Activated CD8-positive, alpha-beta memory T cell treated with anti-CD3 and anti-CD28 coated beads, Interleukin-2, amount 10 ng/mL, durations not matched to agents 7 days and 5 days (primary cell): ENCODE measurements at regions of chr14 and their contacts with region 1.

Region 1: GRCh38 chr14:93033983-93034670 is 81.6 kb downstream of the ITPK1 start:
- DNase-seq: peak; percentile 80
- ATAC-seq: peak; percentile 93
- H3K4me3 Mint-ChIP-seq: no peak overlapping the region
- H3K27ac Mint-ChIP-seq: peak overlapping the region; percentile 80
- H3K4me1 Mint-ChIP-seq: peaks cover 45% of the 10 kb centered on the region
- H3K27me3 Mint-ChIP-seq: no peaks in the 10 kb centered on the region

Region 2: DNA sequence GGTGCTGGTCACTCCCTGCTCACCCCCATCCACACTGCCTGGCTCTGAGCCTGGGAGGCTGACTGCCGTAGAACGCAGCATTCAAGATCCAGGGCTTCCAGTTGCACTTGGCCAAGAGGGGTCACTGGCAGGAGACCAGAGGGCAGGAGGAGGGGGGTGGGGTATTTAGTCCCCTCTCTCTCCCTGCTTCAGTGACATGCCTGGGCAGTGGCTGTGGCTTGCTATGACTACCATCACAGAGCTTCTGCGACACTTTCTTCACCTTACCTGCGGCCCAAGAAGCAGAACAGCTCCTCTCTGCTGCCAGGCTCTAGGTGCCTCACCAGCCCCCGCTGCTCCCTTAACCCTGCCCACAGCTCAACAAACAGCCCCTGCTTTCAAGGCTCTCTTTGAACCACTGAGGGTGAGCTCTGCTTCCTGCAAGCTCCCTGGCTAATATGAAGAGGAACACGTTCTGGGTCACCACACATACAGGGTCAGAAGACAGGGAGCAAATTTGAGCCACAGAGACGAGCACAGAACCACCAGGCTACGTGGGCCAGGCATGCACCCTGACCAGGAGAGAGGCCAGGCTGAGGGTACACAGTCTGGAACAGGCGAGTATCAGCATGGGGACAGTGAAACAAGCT is 25.9 kb after region 1 on chr14:
- CTCF ChIA-PET with region 1: interaction called, 12 read pairs
- DNase-seq: peak; percentile 57
- ATAC-seq: peak; percentile 59
- H3K4me3 Mint-ChIP-seq: peak overlapping the region; percentile 1
- H3K27ac Mint-ChIP-seq: peak overlapping the region; percentile 81
- H3K4me1 Mint-ChIP-seq: peaks cover 53% of the 10 kb centered on the region
- H3K27me3 Mint-ChIP-seq: no peaks in the 10 kb centered on the region

Region 3: GRCh38 chr14:93132470-93133065 is 98.4 kb after region 1 on chr14:
- CTCF ChIA-PET with region 1: interaction called, 16 read pairs
- DNase-seq: peak; percentile 50
- ATAC-seq: peak; percentile 57
- H3K4me3 Mint-ChIP-seq: no peak overlapping the region
- H3K27ac Mint-ChIP-seq: no peak overlapping the region
- H3K4me1 Mint-ChIP-seq: no peaks in the 10 kb centered on the region
- H3K27me3 Mint-ChIP-seq: peaks cover 12% of the 10 kb centered on the region

Region 4: GRCh38 chr14:93137864-93138263 is 103.7 kb after region 1 on chr14:
- CTCF ChIA-PET with region 1: interaction called, 16 read pairs
- DNase-seq: no peak
- ATAC-seq: no peak
- H3K4me3 Mint-ChIP-seq: no peak overlapping the region
- H3K27ac Mint-ChIP-seq: no peak overlapping the region
- H3K4me1 Mint-ChIP-seq: peaks cover 5% of the 10 kb centered on the region
- H3K27me3 Mint-ChIP-seq: no peaks in the 10 kb centered on the region